Left cardiac atrium (tissue), 4 donors: ENCODE measurements at regions of chr17 and their contacts with region 1.

Region 1: DNA sequence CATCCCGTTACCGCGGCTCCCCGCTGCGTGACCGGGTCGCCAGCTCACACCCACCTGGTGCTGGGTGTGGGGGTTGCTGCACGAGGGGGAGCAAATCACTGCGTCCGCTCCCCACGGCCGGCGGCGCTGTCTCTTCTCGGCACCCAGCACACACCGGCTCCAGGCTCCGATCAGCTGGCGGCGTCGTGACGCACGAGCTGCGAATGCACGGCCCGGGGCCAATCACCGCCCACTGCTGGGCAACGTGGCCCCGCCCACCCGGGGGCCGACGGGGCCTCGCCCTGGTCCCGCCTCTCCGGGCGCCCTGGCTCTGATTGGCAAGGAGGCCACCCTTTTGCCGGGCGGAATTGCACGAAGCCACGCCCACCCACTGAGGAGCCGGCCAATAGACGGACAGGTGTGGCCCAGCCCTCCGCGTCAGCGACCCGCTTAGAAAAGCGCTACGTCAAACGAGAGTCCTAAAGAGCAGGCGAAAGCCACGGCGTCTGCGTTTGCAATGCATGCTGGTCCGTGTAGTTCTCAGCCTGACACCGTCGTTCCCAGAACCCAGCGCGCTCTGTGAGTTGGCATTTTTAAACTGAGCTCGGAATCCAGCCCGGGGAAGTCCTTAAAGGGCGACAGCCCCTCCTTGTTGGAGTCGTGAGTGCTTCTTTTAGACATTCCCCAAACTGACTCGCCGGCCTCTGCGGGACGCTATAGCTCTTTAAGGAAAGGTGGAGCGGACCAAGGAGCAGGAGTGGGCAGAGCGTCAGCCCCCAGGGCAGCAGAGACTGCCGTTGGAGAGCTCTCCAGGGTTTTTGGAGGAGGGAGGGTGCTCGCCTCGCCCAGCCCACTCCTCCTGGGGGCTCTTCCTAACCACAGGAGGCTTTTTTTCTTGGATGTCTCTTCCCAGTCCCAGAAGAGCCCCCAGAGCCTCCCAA is 6.2 kb upstream of the TLCD2 start:
- DNase-seq: peak; percentile 100
- ATAC-seq: peak; percentile 74 to 79

Region 2: GRCh38 chr17:1643293-1643998 is 72.9 kb before region 1 on chr17:
- intact Hi-C with region 1: no loop called
- DNase-seq: no peak
- ATAC-seq: peak; percentile 7 to 27

Region 3: GRCh38 chr17:1673041-1673785 is 43.1 kb before region 1 on chr17:
- intact Hi-C with region 1: loop called in 1 of 2 experiments (anchors 5 kb)
- DNase-seq: no peak
- ATAC-seq: no peak